HCT116 (cell line): ENCODE measurements at regions of chr19 and their contacts with region 1.

Region 1: DNA sequence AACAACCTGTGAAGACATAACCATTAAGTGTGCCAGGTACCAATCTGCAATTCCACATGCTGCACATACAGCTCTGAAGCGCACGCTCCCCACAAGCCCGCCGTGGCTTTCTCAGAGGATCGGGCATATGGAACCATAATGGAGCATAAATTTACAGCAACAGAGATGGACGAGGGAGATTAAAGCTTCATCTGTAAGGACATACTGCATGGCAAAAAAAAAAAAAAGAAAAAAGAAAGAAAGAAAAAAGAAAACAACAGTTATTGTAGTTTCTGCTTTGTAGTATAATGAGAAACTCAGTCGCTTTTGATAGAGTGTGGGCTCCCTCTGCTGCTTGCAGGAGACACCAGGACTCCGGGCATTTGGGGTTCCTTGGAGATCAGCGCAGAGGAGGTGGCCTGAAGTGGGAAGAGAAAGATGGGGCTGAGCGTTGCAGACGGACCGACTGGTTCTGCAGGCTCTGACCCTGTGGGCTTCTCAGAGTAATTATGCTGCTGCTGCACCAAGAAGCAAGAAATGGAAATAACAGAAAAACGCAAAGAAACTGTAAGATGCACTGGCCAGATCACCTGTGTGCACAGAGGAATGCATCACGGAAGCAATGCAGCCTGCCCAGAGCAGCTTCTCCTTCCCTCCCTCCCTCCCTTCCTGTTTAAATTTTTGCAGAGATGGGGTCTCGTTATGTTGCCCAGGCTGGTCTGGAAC is 10.8 kb upstream of the PDCD5 start:
- DNase-seq: peak; percentile 26
- ATAC-seq: peak; percentile 96
- H3K4me3 ChIP-seq: no peak overlapping the region
- H3K27ac ChIP-seq: no peak overlapping the region
- H3K4me1 ChIP-seq: no peaks in the 10 kb centered on the region
- H3K27me3 ChIP-seq: no peaks in the 10 kb centered on the region
- CTCF ChIP-seq: peak; percentile 68 to 80 (median 71); a peak in 5 of 6 replicates
- POLR2A ChIP-seq: no peak
- RAD21 ChIP-seq: peak; percentile 87

Region 2: GRCh38 chr19:30666301-30666803 is 1903.9 kb before region 1 on chr19:
- CTCF ChIA-PET with region 1: no interaction called
- POLR2A ChIA-PET with region 1: no interaction called
- RAD21 ChIA-PET with region 1: interaction called in 1 of 2 experiments, 5 read pairs
- intact Hi-C with region 1: loop called (anchors 1 kb)
- DNase-seq: no peak
- ATAC-seq: peak; percentile 65
- H3K4me3 ChIP-seq: no peak overlapping the region
- H3K27ac ChIP-seq: no peak overlapping the region
- H3K4me1 ChIP-seq: no peaks in the 10 kb centered on the region
- H3K27me3 ChIP-seq: no peaks in the 10 kb centered on the region
- CTCF ChIP-seq: peak; percentile 30 to 96 (median 95); a peak in 5 of 6 replicates
- POLR2A ChIP-seq: no peak
- RAD21 ChIP-seq: peak; percentile 60

Region 3: GRCh38 chr19:30682999-30683536 is 1887.2 kb before region 1 on chr19:
- CTCF ChIA-PET with region 1: interaction called, 5 read pairs
- POLR2A ChIA-PET with region 1: no interaction called
- RAD21 ChIA-PET with region 1: no interaction called
- intact Hi-C with region 1: loop called (anchors 1 kb)
- DNase-seq: peak; percentile 12
- ATAC-seq: peak; percentile 83
- H3K4me3 ChIP-seq: no peak overlapping the region
- H3K27ac ChIP-seq: no peak overlapping the region
- H3K4me1 ChIP-seq: no peaks in the 10 kb centered on the region
- H3K27me3 ChIP-seq: peaks cover 4% of the 10 kb centered on the region; the same call in 1 of the 2 replicates
- CTCF ChIP-seq: peak; percentile 53 to 96 (median 79); a peak in 5 of 6 replicates
- POLR2A ChIP-seq: no peak
- RAD21 ChIP-seq: peak; percentile 73

Region 4: GRCh38 chr19:32287811-32288227 is 282.4 kb before region 1 on chr19:
- CTCF ChIA-PET with region 1: interaction called, 3 read pairs
- POLR2A ChIA-PET with region 1: no interaction called
- RAD21 ChIA-PET with region 1: interaction called in 1 of 2 experiments, 5 read pairs
- intact Hi-C with region 1: loop called (anchors 1 kb)
- DNase-seq: peak; percentile 61
- ATAC-seq: peak; percentile 98
- H3K4me3 ChIP-seq: no peak overlapping the region
- H3K27ac ChIP-seq: no peak overlapping the region
- H3K4me1 ChIP-seq: no peaks in the 10 kb centered on the region
- H3K27me3 ChIP-seq: 0 out of 2 replicates have a peak, but pooled peaks cover 3% of the 10 kb centered on the region
- CTCF ChIP-seq: peak; percentile 41 to 65 (median 43); a peak in 5 of 6 replicates
- POLR2A ChIP-seq: no peak
- RAD21 ChIP-seq: peak; percentile 74

Region 5: GRCh38 chr19:32339988-32340874 is 230.0 kb before region 1 on chr19:
- CTCF ChIA-PET with region 1: interaction called, 6 read pairs
- POLR2A ChIA-PET with region 1: no interaction called
- RAD21 ChIA-PET with region 1: no interaction called
- intact Hi-C with region 1: loop called (anchors 2 kb)
- DNase-seq: no peak
- ATAC-seq: peak; percentile 96
- H3K4me3 ChIP-seq: no peak overlapping the region
- H3K27ac ChIP-seq: no peak overlapping the region
- H3K4me1 ChIP-seq: peaks cover 3 to 11% of the 10 kb centered on the region in 2 experiments; a peak in 3 of 4 replicates
- H3K27me3 ChIP-seq: no peaks in the 10 kb centered on the region
- CTCF ChIP-seq: peak; percentile 29 to 78 (median 73); a peak in 5 of 6 replicates
- POLR2A ChIP-seq: no peak
- RAD21 ChIP-seq: peak; percentile 53

Region 6: DNA sequence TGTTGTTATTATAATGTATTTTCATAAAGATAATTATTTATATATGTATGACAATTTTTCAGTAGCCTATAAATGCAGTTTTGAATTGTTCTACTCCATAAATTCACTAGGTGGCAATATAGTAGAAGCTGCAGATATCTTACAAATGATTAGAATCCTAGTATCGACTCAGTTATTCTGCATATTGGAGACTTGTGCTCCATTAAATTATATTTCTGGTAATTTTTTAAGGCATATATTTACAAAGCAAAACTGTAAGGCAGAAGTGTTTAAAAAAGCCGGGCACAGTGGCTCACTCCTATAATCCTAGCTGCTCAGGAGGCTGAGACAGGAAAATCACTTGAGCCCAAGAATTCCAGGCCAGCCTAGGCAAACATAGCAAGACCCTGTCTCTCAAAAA is 106.0 kb before region 1 on chr19:
- CTCF ChIA-PET with region 1: interaction called, 7 read pairs
- POLR2A ChIA-PET with region 1: no interaction called
- RAD21 ChIA-PET with region 1: no interaction called
- intact Hi-C with region 1: loop called (anchors 1 kb)
- DNase-seq: peak; percentile 3
- ATAC-seq: peak; percentile 46; the same call in 1 of the 2 replicates
- H3K4me3 ChIP-seq: no peak overlapping the region
- H3K27ac ChIP-seq: no peak overlapping the region
- H3K4me1 ChIP-seq: no peaks in the 10 kb centered on the region
- H3K27me3 ChIP-seq: no peaks in the 10 kb centered on the region
- CTCF ChIP-seq: peak; percentile 18 to 35 (median 19); a peak in 3 of 6 replicates
- POLR2A ChIP-seq: no peak
- RAD21 ChIP-seq: peak; percentile 47; the same call in 1 of the 2 replicates

Region 7: DNA sequence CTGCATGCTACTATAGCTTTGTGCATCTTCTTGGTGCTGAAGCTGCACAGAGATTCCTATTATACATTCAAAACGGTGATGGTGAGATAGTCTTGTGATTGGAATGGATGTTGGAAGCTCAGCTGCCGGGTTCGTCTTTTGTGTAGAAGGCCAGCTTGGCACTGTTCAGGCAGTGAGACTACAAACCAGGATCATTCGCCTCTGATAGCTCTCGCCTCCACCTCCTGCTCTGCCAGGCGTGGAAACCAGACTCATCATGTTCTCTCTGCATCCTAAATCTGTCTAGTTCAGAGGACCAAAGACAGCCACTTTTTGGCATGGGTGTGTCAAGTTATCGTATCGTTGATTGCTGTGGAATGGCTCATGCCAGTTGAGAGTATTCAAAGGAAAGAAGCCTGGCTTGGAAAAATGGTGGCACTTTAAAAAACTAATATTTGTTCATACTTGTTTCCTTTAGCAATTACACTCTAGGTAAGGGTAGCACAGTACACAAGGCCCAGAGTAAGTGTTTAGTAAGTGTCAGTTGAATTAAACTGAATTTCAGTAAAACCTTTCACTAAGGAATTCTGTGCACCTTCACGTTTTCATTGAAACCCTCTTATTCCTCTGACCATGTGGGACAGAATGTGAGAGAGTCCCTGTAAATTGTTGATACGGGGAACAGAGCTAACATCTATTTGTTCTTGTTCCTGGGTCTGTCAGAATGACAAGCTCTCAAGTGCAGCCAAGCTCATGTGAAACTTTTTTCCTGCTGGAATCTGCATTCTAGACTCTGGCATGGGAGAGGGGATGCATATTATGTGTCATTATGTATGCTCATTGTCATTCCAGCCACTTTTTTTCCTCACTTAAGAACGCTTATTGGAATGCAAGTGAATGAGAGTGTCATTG is 94.8 kb before region 1 on chr19:
- CTCF ChIA-PET with region 1: no interaction called
- POLR2A ChIA-PET with region 1: no interaction called
- RAD21 ChIA-PET with region 1: no interaction called
- intact Hi-C with region 1: no loop called
- DNase-seq: no peak
- ATAC-seq: no peak
- H3K4me3 ChIP-seq: no peak overlapping the region
- H3K27ac ChIP-seq: no peak overlapping the region
- H3K4me1 ChIP-seq: no peaks in the 10 kb centered on the region
- H3K27me3 ChIP-seq: no peaks in the 10 kb centered on the region
- CTCF ChIP-seq: no peak
- POLR2A ChIP-seq: no peak
- RAD21 ChIP-seq: no peak